ENCODE measurements at regions of chr3 and their contacts with region 1.

Region 1: DNA sequence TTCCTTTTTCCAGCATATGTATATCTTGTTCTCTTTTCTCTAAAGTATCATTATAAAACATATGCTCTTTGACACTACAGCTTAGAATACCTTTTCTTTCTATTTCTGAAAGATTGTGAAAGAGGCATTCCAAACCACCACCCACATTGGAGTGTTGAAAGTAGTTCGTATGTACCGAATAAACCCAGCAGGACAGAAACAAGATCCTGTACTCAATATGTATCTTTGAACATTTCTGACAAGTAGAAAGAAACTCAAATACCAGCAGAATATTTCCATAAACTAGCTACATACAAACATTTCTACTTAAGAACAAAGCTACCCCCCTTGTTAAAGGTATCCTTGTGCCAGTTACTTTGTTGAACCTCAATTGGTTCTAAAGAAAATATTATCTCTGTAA is 415.3 kb upstream of the ALCAM start:
- DNase-seq: no peak
- H3K4me3 Mint-ChIP-seq: no peak overlapping the region
- H3K27ac Mint-ChIP-seq: no peak overlapping the region
- H3K4me1 Mint-ChIP-seq: no peaks in the 10 kb centered on the region
- H3K27me3 Mint-ChIP-seq: peaks cover 3% of the 10 kb centered on the region

Region 2: DNA sequence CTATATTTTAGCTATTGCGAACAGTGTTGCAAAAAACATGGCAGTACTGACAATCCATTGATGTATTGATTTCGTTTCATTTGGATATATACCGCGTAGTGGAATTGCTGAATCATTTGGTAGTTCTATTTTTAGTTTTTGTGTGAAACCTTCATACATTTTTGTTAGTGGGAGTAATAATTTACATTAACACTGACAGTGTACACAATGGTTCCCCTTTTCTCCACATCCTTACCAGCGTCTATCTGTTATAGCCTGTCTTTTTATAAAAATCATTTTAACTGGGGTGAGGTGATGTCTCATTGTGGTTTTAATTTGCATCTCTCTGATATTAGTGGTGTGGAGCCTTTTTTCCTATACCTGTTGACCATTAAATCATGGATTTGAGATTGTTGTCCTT is 22.9 kb after region 1 on chr3:
- CTCF ChIA-PET with region 1: no interaction called
- intact Hi-C with region 1: loop called (anchors 2 kb)
- DNase-seq: no peak
- H3K4me3 Mint-ChIP-seq: no peak overlapping the region
- H3K27ac Mint-ChIP-seq: no peak overlapping the region
- H3K4me1 Mint-ChIP-seq: no peaks in the 10 kb centered on the region
- H3K27me3 Mint-ChIP-seq: no peaks in the 10 kb centered on the region

Region 3: DNA sequence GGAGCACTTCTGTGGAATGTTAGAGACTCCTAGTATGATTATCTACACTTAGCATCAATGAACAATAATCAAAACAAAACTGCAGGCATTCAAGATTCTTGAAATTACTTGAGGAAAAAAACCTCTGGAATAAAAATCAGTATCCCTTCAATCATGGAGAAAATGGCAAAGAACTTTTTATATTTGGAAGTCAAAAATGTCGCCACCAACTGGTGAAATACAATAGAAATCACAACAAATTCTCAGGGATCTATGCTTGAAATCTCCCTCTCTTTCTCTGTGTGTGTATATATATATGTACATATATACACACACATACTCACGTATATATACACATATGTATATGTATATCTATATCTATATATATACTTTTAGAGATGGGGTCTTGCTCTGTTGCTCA is 36.4 kb after region 1 on chr3:
- CTCF ChIA-PET with region 1: no interaction called
- intact Hi-C with region 1: no loop called
- DNase-seq: no peak
- H3K4me3 Mint-ChIP-seq: no peak overlapping the region
- H3K27ac Mint-ChIP-seq: no peak overlapping the region
- H3K4me1 Mint-ChIP-seq: no peaks in the 10 kb centered on the region
- H3K27me3 Mint-ChIP-seq: no peaks in the 10 kb centered on the region

Measured in activated naive CD4-positive, alpha-beta T cell treated with anti-CD3 and anti-CD28 coated beads for 36 hours (primary cell).